Transverse colon (tissue), 4 donors: ENCODE measurements at regions of chr12 and their contacts with region 1.

Region 1: DNA sequence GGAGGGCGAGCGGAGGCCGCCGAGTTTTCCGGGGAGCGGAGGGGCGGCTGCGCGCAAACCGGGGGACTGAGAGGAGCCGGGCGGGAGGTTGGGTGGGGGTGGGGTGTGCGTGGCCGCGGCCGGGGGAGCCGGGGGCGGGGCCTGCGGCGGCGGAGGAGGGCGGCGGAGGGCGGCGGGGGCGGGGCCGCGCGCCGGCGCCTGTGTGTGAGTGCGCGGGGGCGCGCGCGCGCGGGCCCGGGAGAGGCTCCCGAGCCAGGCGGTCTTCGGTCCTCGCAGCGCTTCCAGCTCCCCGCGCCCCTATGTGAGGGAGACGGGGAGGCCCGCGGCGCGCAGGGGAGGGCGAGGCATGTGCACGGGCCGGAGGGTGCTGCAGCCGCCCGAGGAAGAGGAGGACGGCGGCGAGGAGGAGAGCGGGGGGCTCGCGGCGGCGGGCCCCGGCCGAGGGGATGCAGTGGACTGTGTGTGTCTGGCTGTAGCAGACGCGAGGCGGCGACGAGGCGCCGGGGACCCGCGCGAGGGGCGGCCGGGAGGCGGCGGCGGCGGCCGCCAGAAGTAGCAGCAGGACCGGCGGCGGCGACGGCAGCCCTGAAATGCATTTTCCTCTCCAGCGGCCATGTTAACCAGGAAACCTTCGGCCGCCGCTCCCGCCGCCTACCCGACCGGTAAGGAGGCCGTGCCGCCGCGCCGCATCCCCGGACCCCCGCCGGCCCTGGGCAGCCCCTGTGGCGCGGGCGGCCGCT is at the start of gene DYRK2:
- DNase-seq: peak; percentile 85
- H3K4me3 ChIP-seq: peak within 1 kb of the TSS; percentile 94 to 100 (median 98)
- H3K27ac ChIP-seq: peak within 1 kb of the TSS; percentile 99 to 100 (median 100)
- H3K4me1 ChIP-seq: peaks cover 18 to 44% (median 24%) of the 10 kb centered on the region in 4 donors
- H3K27me3 ChIP-seq: no peaks in the 10 kb centered on the region
- CTCF ChIP-seq: no peak
- EP300 ChIP-seq: no peak
- POLR2A ChIP-seq: peak; percentile 87
- total RNA-seq, gene DYRK2: 26.9 to 147 (median 96.6) TPM

Region 2: GRCh38 chr12:67433385-67434175 is 215.1 kb before region 1 on chr12:
- in situ Hi-C with region 1: no loop called
- intact Hi-C with region 1: loop called (anchors 10 kb)
- DNase-seq: no peak
- H3K4me3 ChIP-seq: no peak overlapping the region
- H3K27ac ChIP-seq: peak overlapping the region; percentile 43 to 64 (median 59)
- H3K4me1 ChIP-seq: peaks cover 6 to 72% (median 38%) of the 10 kb centered on the region in 4 donors
- H3K27me3 ChIP-seq: no peaks in the 10 kb centered on the region
- CTCF ChIP-seq: no peak
- EP300 ChIP-seq: no peak
- POLR2A ChIP-seq: no peak

Region 3: DNA sequence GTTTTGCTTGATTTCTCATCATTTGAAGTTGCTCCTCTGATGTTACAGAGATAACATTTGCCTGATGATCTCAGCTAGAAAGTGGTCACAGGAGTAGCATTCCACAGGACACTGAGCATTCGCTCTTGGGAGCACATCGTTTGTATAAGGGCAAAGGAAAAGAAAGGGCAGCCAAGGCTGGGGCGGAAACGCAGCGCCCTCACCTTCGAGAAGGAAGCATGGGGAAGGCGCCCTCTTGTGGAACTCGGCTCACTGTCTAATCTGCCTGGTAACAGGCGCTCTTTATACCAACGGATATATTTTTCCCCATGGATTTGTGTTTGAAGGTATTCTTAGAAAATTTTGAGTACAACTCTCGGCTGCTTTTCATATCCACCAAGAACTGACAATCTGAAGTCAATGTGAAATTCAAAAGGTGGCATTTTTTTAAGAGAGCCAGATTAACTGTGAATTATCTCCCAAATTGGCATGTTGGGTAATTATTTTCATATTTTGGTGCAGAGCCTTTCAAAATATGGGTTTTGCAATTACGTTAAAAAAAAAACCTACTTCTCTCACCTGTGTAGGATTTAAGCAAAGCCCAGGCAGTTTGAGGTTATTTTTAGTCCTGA is 206.8 kb before region 1 on chr12:
- in situ Hi-C with region 1: loop called in 1 of 4 experiments (anchors 10 kb)
- intact Hi-C with region 1: loop called (anchors 10 kb)
- DNase-seq: peak; percentile 93
- H3K4me3 ChIP-seq: no peak overlapping the region
- H3K27ac ChIP-seq: peak overlapping the region; percentile 5 to 33 (median 10)
- H3K4me1 ChIP-seq: peaks cover 8 to 20% (median 9%) of the 10 kb centered on the region in 4 donors
- H3K27me3 ChIP-seq: no peaks in the 10 kb centered on the region
- CTCF ChIP-seq: peak; percentile 84 to 92 (median 85)
- EP300 ChIP-seq: no peak
- POLR2A ChIP-seq: no peak

Region 4: DNA sequence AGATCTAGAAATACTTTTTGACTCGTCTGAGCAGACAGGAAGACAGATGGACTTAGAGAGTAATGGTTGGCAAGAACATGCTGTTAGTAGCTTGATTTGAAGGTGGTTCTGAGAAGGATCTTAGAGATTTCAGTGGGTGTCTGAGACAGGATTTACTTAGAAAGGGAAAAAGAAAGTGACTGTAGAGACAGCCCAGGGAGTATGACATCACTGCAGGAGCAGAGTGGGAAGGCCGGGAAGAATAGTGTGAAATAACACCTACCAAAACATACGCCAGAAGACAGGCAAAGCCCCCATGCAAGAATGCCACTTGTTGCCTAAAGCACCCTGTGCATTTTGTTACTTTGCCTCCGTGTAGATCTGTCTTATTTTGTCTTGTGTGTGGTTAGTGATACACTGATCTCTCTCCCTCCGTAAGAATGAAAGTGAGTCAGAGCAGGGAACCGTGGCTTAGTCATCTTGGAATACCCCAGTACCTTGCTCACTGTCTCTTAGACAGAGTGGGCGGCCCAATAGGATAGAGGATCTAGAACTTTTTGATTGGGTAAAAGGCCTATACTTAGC is 179.2 kb after region 1 on chr12:
- in situ Hi-C with region 1: no loop called
- intact Hi-C with region 1: loop called (anchors 2 kb)
- DNase-seq: peak; percentile 32
- H3K4me3 ChIP-seq: peak overlapping the region; percentile 13 to 39 (median 21)
- H3K27ac ChIP-seq: peak overlapping the region; percentile 81 to 88 (median 84)
- H3K4me1 ChIP-seq: peaks cover 0 to 17% (median 9%) of the 10 kb centered on the region in 4 donors
- H3K27me3 ChIP-seq: no peaks in the 10 kb centered on the region
- CTCF ChIP-seq: no peak
- EP300 ChIP-seq: no peak
- POLR2A ChIP-seq: no peak

Region 5: GRCh38 chr12:67937836-67938235 is 289.1 kb after region 1 on chr12:
- in situ Hi-C with region 1: loop called (anchors 10 to 25 kb)
- intact Hi-C with region 1: no loop called
- DNase-seq: no peak
- H3K4me3 ChIP-seq: no peak overlapping the region
- H3K27ac ChIP-seq: no peak overlapping the region
- H3K4me1 ChIP-seq: peaks cover 3 to 17% (median 11%) of the 10 kb centered on the region in 4 donors
- H3K27me3 ChIP-seq: no peaks in the 10 kb centered on the region
- CTCF ChIP-seq: no peak
- EP300 ChIP-seq: no peak
- POLR2A ChIP-seq: no peak

Region 6: GRCh38 chr12:67943226-67943892 is 294.7 kb after region 1 on chr12:
- in situ Hi-C with region 1: loop called (anchors 10 to 25 kb)
- intact Hi-C with region 1: no loop called
- DNase-seq: peak; percentile 72
- H3K4me3 ChIP-seq: no peak overlapping the region
- H3K27ac ChIP-seq: peak overlapping the region in 2 of 4 donors; percentile 5 to 9
- H3K4me1 ChIP-seq: peaks cover 7 to 25% (median 16%) of the 10 kb centered on the region in 4 donors
- H3K27me3 ChIP-seq: no peaks in the 10 kb centered on the region
- CTCF ChIP-seq: peak; percentile 74 to 85 (median 79)
- EP300 ChIP-seq: no peak
- POLR2A ChIP-seq: no peak

Region 7: DNA sequence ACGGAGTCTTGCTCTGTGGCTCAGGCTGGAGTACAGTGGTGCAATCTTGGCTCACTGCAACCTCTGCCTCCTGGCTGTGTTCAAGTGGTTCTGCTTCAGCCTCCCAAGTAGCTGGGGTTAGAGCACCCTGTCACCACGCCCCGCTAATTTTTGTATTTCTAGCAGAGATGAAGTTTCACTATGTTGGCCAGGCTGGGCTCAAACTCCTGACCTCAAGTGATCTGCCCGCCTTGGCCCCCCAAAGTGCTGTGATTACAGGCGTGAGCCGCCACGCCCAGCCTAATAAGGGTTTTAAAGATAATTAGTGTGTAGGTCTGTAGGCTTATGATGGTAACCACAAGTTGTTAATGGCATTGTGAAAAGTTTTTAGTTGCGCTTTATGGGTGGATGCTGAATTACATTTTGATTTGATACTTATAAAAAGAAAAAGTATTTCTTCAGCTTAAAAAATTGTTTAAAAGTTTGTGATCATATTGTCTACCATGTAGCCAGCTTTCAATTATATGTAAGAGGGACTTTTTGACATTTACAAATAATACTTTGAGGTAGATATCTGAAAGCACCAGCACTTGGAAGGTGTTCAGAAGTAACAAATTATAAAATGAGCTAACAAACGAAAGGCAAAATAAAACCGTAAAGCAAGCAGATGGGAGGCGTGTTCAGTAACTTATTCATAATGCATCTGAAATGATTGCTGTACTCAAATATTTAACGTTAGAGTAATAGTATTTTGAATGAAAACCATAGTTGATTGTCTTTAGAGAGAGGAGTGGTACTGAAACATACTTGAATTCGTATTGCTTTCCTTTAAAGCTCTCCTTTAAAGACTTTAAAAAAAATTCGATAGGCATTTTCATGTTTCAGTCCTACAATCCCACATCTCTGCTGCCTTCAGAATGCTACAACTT is 1196.4 kb after region 1 on chr12:
- in situ Hi-C with region 1: no loop called
- intact Hi-C with region 1: no loop called
- DNase-seq: no peak
- H3K4me3 ChIP-seq: no peak overlapping the region
- H3K27ac ChIP-seq: no peak overlapping the region
- H3K4me1 ChIP-seq: no peaks in the 10 kb centered on the region
- H3K27me3 ChIP-seq: no peaks in the 10 kb centered on the region
- CTCF ChIP-seq: no peak
- EP300 ChIP-seq: no peak
- POLR2A ChIP-seq: no peak